Aorta (tissue), 5 donors: ENCODE measurements at regions of chr17 and their contacts with region 1.

Region 1: GRCh38 chr17:47315451-47316266 is 8.1 kb upstream of the EFCAB13 start:
- DNase-seq: no peak
- ATAC-seq: peak; percentile 86
- H3K4me3 ChIP-seq: no peak overlapping the region
- H3K27ac ChIP-seq: peak overlapping the region; percentile 60 to 91
- H3K4me1 ChIP-seq: peaks cover 0 to 6% of the 10 kb centered on the region in 2 donors
- H3K27me3 ChIP-seq: no peaks in the 10 kb centered on the region

Region 2: GRCh38 chr17:47253541-47254402 is 61.9 kb before region 1 on chr17 and contains the start of gene ITGB3:
- intact Hi-C with region 1: loop called in 1 of 2 experiments (anchors 5 kb)
- DNase-seq: peak; percentile 86 to 96
- ATAC-seq: peak; percentile 93
- H3K4me3 ChIP-seq: peak within 1 kb of the TSS; percentile 83 to 94
- H3K27ac ChIP-seq: peak within 1 kb of the TSS; percentile 59 to 96
- H3K4me1 ChIP-seq: peaks cover 4 to 8% of the 10 kb centered on the region in 2 donors
- H3K27me3 ChIP-seq: no peaks in the 10 kb centered on the region
- total RNA-seq, gene ITGB3: 79.5 to 210 TPM